Mammary epithelial cell (primary cell): ENCODE measurements at regions of chr3 and their contacts with region 1.

Region 1: GRCh38 chr3:188947401-188948280 is 224.1 kb upstream of the TPRG1 start:
- DNase-seq: peak; percentile 85
- H3K4me3 ChIP-seq: peak overlapping the region; percentile 23 to 47 (median 43)
- H3K27ac ChIP-seq: peak overlapping the region; percentile 86
- H3K4me1 ChIP-seq: peaks cover 37% of the 10 kb centered on the region
- H3K27me3 ChIP-seq: no peaks in the 10 kb centered on the region
- CTCF ChIP-seq: peak; percentile 31 to 53

Region 2: DNA sequence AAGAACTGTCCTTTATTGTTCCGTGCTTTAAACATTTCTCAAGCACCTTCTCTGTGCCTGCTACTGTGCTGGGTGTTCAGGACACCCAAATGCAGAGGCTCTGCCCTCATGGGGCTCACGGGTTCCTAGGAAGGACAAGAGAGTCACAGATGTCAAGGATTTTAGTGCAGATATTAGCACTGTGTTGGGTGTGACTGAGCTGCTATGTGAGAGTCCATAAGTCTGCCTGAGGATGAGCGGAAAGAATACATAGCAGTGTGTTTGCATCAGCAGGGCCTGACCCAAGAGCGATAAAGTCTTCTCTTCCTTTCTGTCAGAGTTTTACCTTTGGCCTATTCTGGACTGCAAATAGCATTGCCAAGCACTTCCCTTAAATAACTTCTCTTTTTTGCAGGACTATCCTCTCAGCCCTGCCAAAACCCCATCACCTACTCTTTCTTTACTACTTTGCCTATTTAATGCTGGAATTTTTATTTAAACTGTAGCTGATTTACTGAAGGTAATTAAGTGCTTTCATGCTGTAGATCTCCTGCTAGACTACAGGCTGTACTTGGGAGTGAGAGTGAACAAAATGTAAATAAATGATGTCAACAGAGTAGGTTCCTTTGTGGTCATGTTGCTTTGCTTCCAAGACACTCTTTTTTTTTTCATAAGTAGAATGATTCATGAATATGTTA is 235.3 kb before region 1 on chr3:
- CTCF ChIA-PET with region 1: interaction called, 15 read pairs
- dilution Hi-C with region 1: no loop called
- in situ Hi-C with region 1: no loop called
- intact Hi-C with region 1: no loop called
- DNase-seq: peak; percentile 35
- H3K4me3 ChIP-seq: no peak overlapping the region
- H3K27ac ChIP-seq: no peak overlapping the region
- H3K4me1 ChIP-seq: no peaks in the 10 kb centered on the region
- H3K27me3 ChIP-seq: no peaks in the 10 kb centered on the region
- CTCF ChIP-seq: no peak